ENCODE measurements at regions of chr12 and their contacts with region 1.

Region 1: GRCh38 chr12:14910090-14910915 is 24.6 kb upstream of the MGP start:
- DNase-seq: peak; percentile 73
- ATAC-seq: peak; percentile 85
- H3K4me3 Mint-ChIP-seq: peak overlapping the region; percentile 37
- H3K27ac Mint-ChIP-seq: peak overlapping the region; percentile 91
- H3K4me1 Mint-ChIP-seq: peaks cover 41% of the 10 kb centered on the region
- H3K27me3 Mint-ChIP-seq: no peaks in the 10 kb centered on the region

Region 2: DNA sequence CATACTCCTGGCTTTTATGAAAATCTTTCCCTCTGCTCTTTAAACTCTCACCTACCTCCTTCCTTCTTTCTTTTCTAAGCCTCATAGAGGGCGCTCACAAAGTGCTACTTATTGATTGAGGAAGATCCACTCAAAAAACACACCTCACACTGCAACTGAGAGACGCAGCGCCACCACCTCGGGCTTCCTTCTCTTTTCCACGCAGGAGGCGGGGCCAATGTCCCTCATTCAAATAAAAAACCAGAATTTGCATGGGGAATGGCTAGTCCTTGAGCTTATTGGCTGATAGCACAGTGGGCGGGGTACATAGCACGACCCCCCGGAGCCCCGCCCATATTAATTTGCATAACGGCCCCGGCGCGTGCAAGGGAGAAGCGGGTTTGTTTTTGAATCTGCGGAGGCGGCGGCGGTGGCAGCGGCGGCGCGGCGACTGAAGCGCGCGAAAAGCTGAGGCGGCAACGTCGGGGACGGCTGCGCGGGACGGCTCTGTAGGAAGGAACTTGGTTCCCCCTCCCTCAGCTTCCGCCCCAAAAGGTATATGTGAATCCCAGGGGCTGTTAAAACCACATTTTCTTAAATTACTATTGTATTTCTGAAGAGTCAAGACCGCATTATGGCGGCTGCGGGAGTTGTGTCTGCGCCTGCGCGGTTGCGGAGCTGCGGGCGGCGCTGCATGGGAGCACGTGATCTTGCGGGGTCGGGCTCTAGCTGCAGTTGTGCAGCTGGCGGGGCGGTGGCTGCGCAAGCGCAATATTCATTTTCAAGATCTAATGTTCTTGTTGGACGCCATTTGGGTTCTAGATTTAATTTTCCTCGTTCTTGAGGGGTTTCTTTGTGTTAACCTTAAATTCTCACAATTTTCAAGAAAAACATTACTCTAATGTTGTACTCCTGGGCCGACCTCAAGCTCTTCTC is 544.8 kb before region 1 on chr12 and contains the start of gene ATF7IP:
- CTCF ChIA-PET with region 1: no interaction called
- POLR2A ChIA-PET with region 1: no interaction called
- intact Hi-C with region 1: no loop called
- DNase-seq: peak; percentile 97
- ATAC-seq: peak; percentile 85
- H3K4me3 Mint-ChIP-seq: peak within 1 kb of the TSS; percentile 76
- H3K27ac Mint-ChIP-seq: peak within 1 kb of the TSS; percentile 98
- H3K4me1 Mint-ChIP-seq: peaks cover 33% of the 10 kb centered on the region
- H3K27me3 Mint-ChIP-seq: no peaks in the 10 kb centered on the region
- total RNA-seq, gene ATF7IP: 81.3 to 101 TPM

Region 3: GRCh38 chr12:14479004-14479403 is 431.3 kb before region 1 on chr12:
- CTCF ChIA-PET with region 1: no interaction called
- POLR2A ChIA-PET with region 1: no interaction called
- intact Hi-C with region 1: no loop called
- DNase-seq: no peak
- ATAC-seq: peak; percentile 91
- H3K4me3 Mint-ChIP-seq: no peak overlapping the region
- H3K27ac Mint-ChIP-seq: peak overlapping the region; percentile 51
- H3K4me1 Mint-ChIP-seq: peaks cover 19% of the 10 kb centered on the region
- H3K27me3 Mint-ChIP-seq: no peaks in the 10 kb centered on the region

Region 4: DNA sequence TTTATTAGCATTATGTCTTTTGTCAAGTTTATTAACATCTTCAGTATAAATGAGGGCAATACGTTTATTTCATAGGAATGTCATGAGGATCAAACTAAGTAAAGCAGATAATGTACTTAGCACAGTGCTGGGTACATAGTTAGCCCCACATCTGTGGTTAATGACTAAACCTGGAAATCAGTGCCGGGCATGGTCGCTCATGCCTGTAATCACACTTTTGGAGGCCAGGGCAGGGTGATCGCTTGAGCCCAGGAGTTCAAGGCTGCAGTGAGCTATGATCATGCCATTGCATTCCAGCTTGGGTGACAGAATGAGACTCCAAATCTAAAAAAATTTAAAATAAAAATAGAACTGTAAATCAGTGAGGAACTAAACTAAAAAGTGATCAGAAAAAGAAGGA is 169.2 kb before region 1 on chr12:
- CTCF ChIA-PET with region 1: no interaction called
- POLR2A ChIA-PET with region 1: no interaction called
- intact Hi-C with region 1: no loop called
- DNase-seq: no peak
- ATAC-seq: no peak
- H3K4me3 Mint-ChIP-seq: no peak overlapping the region
- H3K27ac Mint-ChIP-seq: no peak overlapping the region
- H3K4me1 Mint-ChIP-seq: peaks cover 3% of the 10 kb centered on the region
- H3K27me3 Mint-ChIP-seq: no peaks in the 10 kb centered on the region

Region 5: GRCh38 chr12:14774906-14775762 is 135.2 kb before region 1 on chr12:
- CTCF ChIA-PET with region 1: no interaction called
- POLR2A ChIA-PET with region 1: no interaction called
- intact Hi-C with region 1: loop called in 1 of 2 experiments (anchors 1 kb)
- DNase-seq: peak; percentile 47
- ATAC-seq: no peak
- H3K4me3 Mint-ChIP-seq: peak overlapping the region; percentile 96
- H3K27ac Mint-ChIP-seq: peak overlapping the region; percentile 97
- H3K4me1 Mint-ChIP-seq: peaks cover 35% of the 10 kb centered on the region
- H3K27me3 Mint-ChIP-seq: no peaks in the 10 kb centered on the region

Region 6: DNA sequence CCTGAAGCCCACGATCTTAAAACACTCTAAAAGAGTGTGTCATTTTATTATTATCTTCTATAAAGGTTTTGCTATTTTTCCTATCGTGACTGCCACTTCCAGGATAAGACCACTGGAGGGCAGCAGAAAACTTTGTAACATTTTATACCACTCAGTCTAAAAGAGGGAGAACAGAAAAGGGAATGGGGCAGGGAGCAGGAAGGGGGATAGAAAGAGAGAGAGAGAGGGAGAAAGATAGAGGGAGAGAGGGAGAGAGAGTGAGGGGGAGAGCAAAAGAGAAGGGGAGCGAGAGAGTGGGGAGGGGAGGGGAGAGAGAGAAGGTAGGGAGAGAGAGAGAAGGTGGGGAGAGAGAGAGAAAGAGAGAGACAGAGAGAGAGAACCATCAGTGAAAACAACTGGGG is 65.0 kb before region 1 on chr12:
- CTCF ChIA-PET with region 1: no interaction called
- POLR2A ChIA-PET with region 1: no interaction called
- intact Hi-C with region 1: loop called in 1 of 2 experiments (anchors 1 kb)
- DNase-seq: peak; percentile 46
- ATAC-seq: peak; percentile 58
- H3K4me3 Mint-ChIP-seq: no peak overlapping the region
- H3K27ac Mint-ChIP-seq: no peak overlapping the region
- H3K4me1 Mint-ChIP-seq: peaks cover 11% of the 10 kb centered on the region
- H3K27me3 Mint-ChIP-seq: no peaks in the 10 kb centered on the region

Region 7: DNA sequence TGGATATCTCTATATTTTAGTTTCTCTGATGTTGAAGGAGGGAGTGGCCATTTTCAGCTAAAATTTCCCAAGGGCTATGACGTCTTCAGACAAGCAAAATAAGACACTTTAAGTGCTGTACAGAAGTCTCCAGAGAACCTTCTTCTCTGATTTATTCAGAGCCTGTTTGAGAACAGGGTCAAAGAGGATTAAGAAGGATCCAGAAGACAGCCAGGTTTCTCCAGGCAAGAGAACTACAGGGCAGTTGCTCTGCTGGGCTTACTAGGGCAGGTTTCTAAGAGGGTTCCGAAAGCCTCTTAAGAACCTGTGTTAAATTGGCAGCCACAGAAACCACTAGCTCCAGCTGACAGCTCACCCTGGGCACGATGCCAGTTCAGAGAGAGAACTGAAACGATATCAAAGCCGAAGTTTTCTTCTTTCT is 25.8 kb before region 1 on chr12:
- CTCF ChIA-PET with region 1: interaction called, 4 read pairs
- POLR2A ChIA-PET with region 1: no interaction called
- intact Hi-C with region 1: loop called in 1 of 2 experiments (anchors 2 kb)
- DNase-seq: peak; percentile 86
- ATAC-seq: peak; percentile 91
- H3K4me3 Mint-ChIP-seq: no peak overlapping the region
- H3K27ac Mint-ChIP-seq: no peak overlapping the region
- H3K4me1 Mint-ChIP-seq: peaks cover 24% of the 10 kb centered on the region
- H3K27me3 Mint-ChIP-seq: peaks cover 13% of the 10 kb centered on the region

Region 8: DNA sequence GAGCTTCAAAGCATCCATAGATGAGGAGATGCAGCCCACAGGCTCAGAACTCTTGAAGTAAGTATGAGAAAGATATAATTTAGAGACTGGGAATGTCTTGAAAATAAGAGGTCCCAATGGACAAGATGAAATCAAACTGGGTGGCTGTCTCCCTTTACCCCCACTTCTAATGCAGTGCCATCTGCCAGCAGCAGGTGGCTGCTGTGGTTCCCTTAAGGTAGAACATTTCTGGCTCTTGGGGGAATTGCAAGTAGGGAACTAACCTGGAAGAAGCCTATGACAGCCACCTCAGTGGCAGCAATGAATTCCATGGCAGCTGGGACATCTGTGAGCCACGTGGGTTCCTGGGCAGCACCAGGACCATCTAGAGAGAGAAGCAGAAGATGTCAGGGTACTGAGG is 27.4 kb after region 1 on chr12:
- CTCF ChIA-PET with region 1: interaction called, 3 read pairs
- POLR2A ChIA-PET with region 1: no interaction called
- intact Hi-C with region 1: loop called in 1 of 2 experiments (anchors 2 kb)
- DNase-seq: peak; percentile 42
- ATAC-seq: peak; percentile 31
- H3K4me3 Mint-ChIP-seq: no peak overlapping the region
- H3K27ac Mint-ChIP-seq: peak overlapping the region; percentile 44
- H3K4me1 Mint-ChIP-seq: peaks cover 30% of the 10 kb centered on the region
- H3K27me3 Mint-ChIP-seq: no peaks in the 10 kb centered on the region

Region 9: GRCh38 chr12:14948672-14949071 is 38.4 kb after region 1 on chr12:
- CTCF ChIA-PET with region 1: interaction called, 3 read pairs
- POLR2A ChIA-PET with region 1: interaction called, 3 read pairs
- intact Hi-C with region 1: loop called (anchors 1 kb)
- DNase-seq: peak; percentile 68
- ATAC-seq: peak; percentile 82
- H3K4me3 Mint-ChIP-seq: peak overlapping the region; percentile 73
- H3K27ac Mint-ChIP-seq: peak overlapping the region; percentile 96
- H3K4me1 Mint-ChIP-seq: peaks cover 87% of the 10 kb centered on the region
- H3K27me3 Mint-ChIP-seq: no peaks in the 10 kb centered on the region

Region 10: GRCh38 chr12:14960548-14961465 is 50.5 kb after region 1 on chr12:
- CTCF ChIA-PET with region 1: interaction called, 3 read pairs
- POLR2A ChIA-PET with region 1: interaction called, 3 read pairs
- intact Hi-C with region 1: loop called (anchors 1 to 2 kb)
- DNase-seq: peak; percentile 56
- ATAC-seq: peak; percentile 53
- H3K4me3 Mint-ChIP-seq: peak overlapping the region; percentile 96
- H3K27ac Mint-ChIP-seq: peak overlapping the region; percentile 99
- H3K4me1 Mint-ChIP-seq: peaks cover 55% of the 10 kb centered on the region
- H3K27me3 Mint-ChIP-seq: no peaks in the 10 kb centered on the region

Measured in activated CD4-positive, alpha-beta T cell treated with anti-CD3 and anti-CD28 coated beads for 36 hours (primary cell).